A549 (cell line): ENCODE measurements at regions of chr5 and their contacts with region 1.

Region 1: DNA sequence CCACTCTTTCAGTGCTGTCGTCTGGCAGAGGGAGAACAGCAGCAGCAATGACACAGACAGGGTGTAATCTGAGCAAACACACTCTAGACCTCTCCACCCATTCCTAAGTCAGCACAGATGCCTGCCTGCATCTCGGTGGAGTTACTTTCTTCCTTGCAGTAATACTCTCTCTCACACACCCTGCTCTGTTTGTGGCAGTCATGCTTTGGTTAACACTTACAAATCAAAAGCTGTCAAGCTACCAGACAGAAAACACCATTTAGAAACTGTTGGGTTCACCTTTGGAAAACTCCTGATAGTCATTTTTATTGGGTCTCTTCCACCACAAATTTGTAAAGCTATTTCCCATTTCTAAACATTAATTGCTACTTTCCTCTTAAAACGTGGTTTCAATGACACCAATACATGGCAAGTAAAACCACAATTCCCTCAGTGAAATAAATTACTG is 27.3 kb downstream of the LHFPL2 start:
- DNase-seq: peak in 1 of 2 experiments; percentile 23
- ATAC-seq: peak in 1 of 2 experiments; percentile 49; a peak in 3 of 6 replicates
- H3K4me3 ChIP-seq: no peak overlapping the region
- H3K27ac ChIP-seq: peak overlapping the region; percentile 23 to 74; a peak in 3 of 6 replicates
- H3K4me1 ChIP-seq: peaks cover 47% of the 10 kb centered on the region
- CTCF ChIP-seq: no peak
- EP300 ChIP-seq: no peak
- POLR2A ChIP-seq: no peak
- RAD21 ChIP-seq: no peak

Region 2: DNA sequence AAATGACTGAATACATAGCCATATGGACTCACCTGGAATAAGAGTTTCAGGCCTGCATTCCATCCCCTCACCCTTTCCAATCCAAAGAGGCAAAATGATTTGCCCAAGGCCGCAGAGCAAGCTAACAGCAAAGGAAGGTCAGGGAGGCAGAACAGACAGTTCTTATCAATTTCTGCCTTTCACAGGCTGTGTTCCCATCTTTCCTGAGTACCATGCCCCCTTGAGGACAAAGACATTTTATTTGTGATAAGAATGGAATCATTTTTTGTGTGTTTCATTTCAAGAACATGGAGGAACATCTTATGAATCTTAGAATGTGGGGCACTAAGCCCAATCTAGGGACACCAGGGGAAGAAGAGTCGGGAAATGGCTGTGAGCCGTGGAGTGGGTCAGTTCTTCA is 13.3 kb after region 1 on chr5:
- CTCF ChIA-PET with region 1: interaction called, 11 read pairs
- POLR2A ChIA-PET with region 1: no interaction called
- DNase-seq: peak in 1 of 2 experiments; percentile 24
- ATAC-seq: no peak; a peak in 1 of 6 replicates
- H3K4me3 ChIP-seq: no peak overlapping the region
- H3K27ac ChIP-seq: peak overlapping the region in 1 of 2 experiments; percentile 51; a peak in 2 of 6 replicates
- H3K4me1 ChIP-seq: peaks cover 47% of the 10 kb centered on the region
- CTCF ChIP-seq: peak; percentile 37; the same call in 2 of the 3 replicates
- EP300 ChIP-seq: no peak
- POLR2A ChIP-seq: no peak
- RAD21 ChIP-seq: peak; percentile 43 to 47